AG04450 (cell line): ENCODE measurements at regions of chr4 and their contacts with region 1.

Region 1: DNA sequence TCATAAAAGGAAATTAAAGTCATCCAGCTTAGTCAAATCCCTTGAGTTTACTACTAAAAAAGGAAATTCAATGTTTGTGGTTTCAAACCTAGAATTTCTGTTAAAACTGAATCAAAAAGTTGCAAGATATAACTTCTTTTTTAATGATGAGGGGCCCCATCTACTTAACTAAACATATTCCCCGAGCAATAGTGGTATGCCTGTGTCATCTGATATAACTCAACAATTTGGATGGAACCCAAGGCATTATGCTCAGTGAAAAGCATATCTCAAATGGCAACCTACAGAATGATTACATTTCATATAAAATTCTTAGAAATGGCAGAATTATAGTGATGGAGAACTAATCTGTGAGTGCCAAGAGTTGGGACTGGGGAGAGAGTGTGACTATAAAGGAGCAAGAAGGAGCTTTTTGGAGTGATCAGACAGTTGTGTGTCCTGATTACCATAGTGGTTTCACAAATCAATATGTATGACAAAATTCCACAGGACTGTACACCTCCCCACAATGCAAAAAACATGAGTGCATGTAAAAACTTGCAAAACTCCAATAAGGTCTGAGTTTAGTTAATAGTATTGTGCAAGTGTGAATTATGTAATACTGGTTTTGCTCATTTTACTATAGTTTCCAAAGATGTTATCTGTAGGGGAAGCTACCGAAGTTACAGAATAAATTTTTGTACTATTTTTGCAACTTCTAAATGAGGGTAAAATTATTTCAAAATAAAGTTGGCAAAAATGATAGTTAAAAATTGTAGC is 323.2 kb downstream of the ARHGAP24 start:
- DNase-seq: no peak
- H3K4me3 ChIP-seq: no peak overlapping the region
- H3K27ac ChIP-seq: no peak overlapping the region
- H3K27me3 ChIP-seq: no peaks in the 10 kb centered on the region
- CTCF ChIP-seq: no peak

Region 2: DNA sequence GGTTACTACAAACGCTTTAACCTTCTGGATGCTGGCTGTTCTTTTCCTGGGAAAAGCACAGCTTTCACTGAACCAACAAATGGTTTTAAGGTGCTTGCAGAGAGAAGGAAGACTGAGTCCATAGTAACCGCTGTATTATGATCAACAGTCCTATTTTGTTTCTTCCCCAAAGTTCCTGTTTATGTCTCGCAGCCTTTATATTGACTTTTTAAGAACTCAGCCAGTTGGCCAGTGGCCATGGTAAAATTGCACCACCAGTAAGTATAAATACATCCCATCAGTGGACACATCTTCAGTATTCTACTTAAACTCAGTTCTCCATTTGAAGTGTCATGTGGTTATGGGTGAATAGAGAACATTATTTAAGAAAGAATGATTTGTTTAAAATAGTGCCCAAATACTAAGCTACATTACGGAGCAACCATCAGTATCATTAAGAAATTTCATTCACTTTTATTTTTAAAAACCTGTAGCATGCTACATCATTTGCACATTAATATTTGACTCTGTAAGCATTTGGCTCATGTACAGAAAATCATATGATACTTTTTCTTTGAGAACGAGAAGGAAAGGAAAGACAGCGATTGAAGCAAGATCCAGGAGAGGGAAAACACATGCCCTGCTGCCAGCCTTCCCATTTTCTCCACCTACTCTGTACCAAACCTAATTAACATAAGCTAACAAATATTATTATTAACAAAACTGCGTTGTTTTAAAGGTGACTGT is 36.2 kb before region 1 on chr4:
- CTCF ChIA-PET with region 1: interaction called, 19 read pairs
- POLR2A ChIA-PET with region 1: no interaction called
- DNase-seq: peak; percentile 52
- H3K4me3 ChIP-seq: peak overlapping the region; percentile 11; the same call in 1 of the 2 replicates
- H3K27ac ChIP-seq: peak overlapping the region; percentile 79
- H3K27me3 ChIP-seq: no peaks in the 10 kb centered on the region
- CTCF ChIP-seq: no peak

Region 3: GRCh38 chr4:85778632-85779131 is 19.5 kb before region 1 on chr4:
- CTCF ChIA-PET with region 1: interaction called, 21 read pairs
- POLR2A ChIA-PET with region 1: no interaction called
- DNase-seq: no peak
- H3K4me3 ChIP-seq: peak overlapping the region; percentile 67
- H3K27ac ChIP-seq: peak overlapping the region; percentile 33
- H3K27me3 ChIP-seq: no peaks in the 10 kb centered on the region
- CTCF ChIP-seq: no peak

Region 4: DNA sequence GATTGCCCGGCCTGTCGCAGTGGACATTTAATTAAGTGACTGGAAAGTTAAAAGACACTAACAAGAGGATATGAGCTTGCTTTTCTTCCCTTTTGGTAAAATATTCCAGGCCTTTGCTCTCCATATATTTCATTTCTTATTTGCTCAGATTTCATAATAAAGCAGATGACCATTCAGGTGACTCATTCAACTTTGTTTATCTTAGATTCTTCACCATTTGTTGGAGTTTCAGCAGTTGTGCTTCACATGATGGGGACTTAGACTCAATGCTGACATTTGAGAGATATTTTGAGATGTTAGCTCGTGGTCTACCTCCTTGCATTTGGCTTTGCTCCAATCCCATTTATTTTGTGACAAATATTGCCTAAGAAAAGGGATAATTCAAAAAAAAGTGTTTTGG is 11.1 kb before region 1 on chr4:
- CTCF ChIA-PET with region 1: interaction called, 42 read pairs
- POLR2A ChIA-PET with region 1: no interaction called
- DNase-seq: peak; percentile 64
- H3K4me3 ChIP-seq: no peak overlapping the region
- H3K27ac ChIP-seq: peak overlapping the region; percentile 80
- H3K27me3 ChIP-seq: no peaks in the 10 kb centered on the region
- CTCF ChIP-seq: no peak

Region 5: DNA sequence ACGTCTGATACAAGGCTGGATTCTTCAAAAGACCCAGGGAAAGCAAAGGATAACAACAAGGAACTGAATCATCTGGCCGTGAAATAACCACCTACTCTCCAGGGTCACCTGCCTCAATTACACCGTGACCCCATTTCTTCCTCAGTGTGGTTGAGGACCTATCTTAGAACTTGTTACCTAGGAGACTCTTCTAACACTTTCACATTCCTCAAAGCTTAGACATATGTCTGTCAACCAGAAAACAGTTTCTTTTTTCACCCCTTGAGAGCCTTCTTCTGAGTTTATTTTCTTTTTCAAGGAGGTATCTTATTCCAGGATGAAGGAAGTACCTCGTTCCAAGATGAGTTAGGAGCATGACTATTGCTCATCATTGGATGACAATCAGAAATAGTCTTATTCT is 14.6 kb after region 1 on chr4:
- CTCF ChIA-PET with region 1: interaction called, 30 read pairs
- POLR2A ChIA-PET with region 1: no interaction called
- DNase-seq: no peak
- H3K4me3 ChIP-seq: no peak overlapping the region
- H3K27ac ChIP-seq: no peak overlapping the region
- H3K27me3 ChIP-seq: no peaks in the 10 kb centered on the region
- CTCF ChIP-seq: no peak

Region 6: DNA sequence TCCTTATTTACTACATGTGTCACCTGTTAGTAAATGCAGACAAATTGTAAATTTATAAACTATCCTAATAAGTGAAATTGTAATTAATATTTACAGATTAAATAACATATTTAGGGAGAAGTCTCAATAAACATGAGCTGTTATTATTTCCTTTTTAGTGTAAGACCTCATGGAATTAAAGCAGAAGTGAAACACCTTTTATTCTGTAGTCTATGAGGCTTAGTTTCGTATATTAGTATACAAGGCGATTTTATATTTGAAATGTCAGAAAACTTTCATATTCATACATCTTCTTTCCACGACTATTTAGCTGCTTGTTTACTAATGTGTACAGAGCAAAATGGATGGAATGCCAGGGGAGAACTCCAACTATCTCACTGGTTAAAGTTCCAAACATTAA is 91.1 kb after region 1 on chr4:
- CTCF ChIA-PET with region 1: no interaction called
- POLR2A ChIA-PET with region 1: no interaction called
- DNase-seq: no peak
- H3K4me3 ChIP-seq: no peak overlapping the region
- H3K27ac ChIP-seq: no peak overlapping the region
- H3K27me3 ChIP-seq: no peaks in the 10 kb centered on the region
- CTCF ChIP-seq: no peak

Region 7: GRCh38 chr4:86032476-86033022 is 234.4 kb after region 1 on chr4:
- CTCF ChIA-PET with region 1: interaction called, 12 read pairs
- POLR2A ChIA-PET with region 1: no interaction called
- DNase-seq: no peak
- H3K4me3 ChIP-seq: no peak overlapping the region
- H3K27ac ChIP-seq: peak overlapping the region; percentile 57
- H3K27me3 ChIP-seq: no peaks in the 10 kb centered on the region
- CTCF ChIP-seq: no peak

Region 8: GRCh38 chr4:86043755-86044592 is 245.8 kb after region 1 on chr4:
- CTCF ChIA-PET with region 1: interaction called, 26 read pairs
- POLR2A ChIA-PET with region 1: no interaction called
- DNase-seq: no peak
- H3K4me3 ChIP-seq: no peak overlapping the region
- H3K27ac ChIP-seq: no peak overlapping the region
- H3K27me3 ChIP-seq: no peaks in the 10 kb centered on the region
- CTCF ChIP-seq: peak; percentile 69